ENCODE measurements at regions of chr1 and their contacts with region 1.

Region 1: GRCh38 chr1:198747127-198747526 is 108.3 kb downstream of the PTPRC start:
- DNase-seq: no peak
- H3K4me3 Mint-ChIP-seq: no peak overlapping the region
- H3K27ac Mint-ChIP-seq: no peak overlapping the region
- H3K4me1 Mint-ChIP-seq: peaks cover 12% of the 10 kb centered on the region
- H3K27me3 Mint-ChIP-seq: no peaks in the 10 kb centered on the region

Region 2: DNA sequence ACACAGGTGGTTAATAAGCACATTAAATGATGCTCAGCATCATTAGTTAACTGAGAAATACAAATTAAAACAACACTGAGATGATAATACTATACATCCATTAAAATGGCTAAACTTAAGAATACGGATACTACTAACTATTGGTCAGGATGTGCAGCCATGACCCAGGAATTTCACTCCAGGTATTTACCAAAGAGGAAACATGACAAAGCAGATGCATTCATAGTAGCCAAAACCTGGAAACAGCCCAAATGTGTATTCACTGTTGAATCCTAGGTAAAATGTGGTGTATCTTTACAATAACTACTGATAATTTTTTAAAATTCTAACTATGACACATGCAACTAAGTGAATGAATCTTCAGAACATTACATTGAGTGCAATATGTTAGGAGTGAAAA is 35.3 kb before region 1 on chr1:
- CTCF ChIA-PET with region 1: no interaction called
- POLR2A ChIA-PET with region 1: interaction called, 14 read pairs
- DNase-seq: no peak
- H3K4me3 Mint-ChIP-seq: no peak overlapping the region
- H3K27ac Mint-ChIP-seq: no peak overlapping the region
- H3K4me1 Mint-ChIP-seq: peaks cover 12% of the 10 kb centered on the region
- H3K27me3 Mint-ChIP-seq: no peaks in the 10 kb centered on the region

Measured in activated CD4-positive, alpha-beta T cell treated with anti-CD3 and anti-CD28 coated beads, Interleukin-2, amount 10 ng/mL, durations not matched to agents 7 days and 5 days (primary cell).